ENCODE measurements at regions of chr7 and their contacts with region 1.

Region 1: DNA sequence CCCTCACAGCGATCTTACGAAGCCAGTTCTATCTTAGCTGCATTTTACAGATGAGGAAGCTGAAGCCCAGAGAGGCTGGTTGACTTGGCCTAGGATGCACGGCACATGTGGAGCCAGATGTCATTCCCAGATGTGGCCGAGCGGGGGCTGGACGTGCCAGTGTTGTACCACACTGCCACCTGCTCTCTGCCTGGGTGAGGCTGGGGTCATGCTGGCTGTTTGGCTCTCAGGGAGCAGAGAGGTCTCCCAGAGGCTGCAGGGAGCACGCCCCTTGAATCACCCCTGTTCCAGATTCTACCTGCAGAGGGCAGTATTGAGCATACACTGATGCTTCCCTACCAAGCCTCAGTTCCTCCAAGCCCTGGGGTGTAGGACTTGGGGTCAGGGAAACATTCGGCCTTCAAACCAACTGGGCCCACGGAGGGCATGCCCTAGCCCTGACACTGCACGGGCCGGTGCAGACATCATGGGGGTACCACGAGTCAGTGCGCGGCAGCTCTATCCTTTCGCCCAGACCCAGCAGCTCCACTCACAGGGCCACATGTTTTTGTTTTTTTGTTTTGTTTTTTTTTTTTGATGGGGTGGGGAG is 3.8 kb upstream of the GTF2IRD1 start:
- DNase-seq: peak in 1 of 2 donors; percentile 53
- ATAC-seq: peak in 5 of 8 donors; percentile 15 to 52 (median 23)
- H3K4me3 ChIP-seq: no peak overlapping the region
- H3K27ac ChIP-seq: no peak overlapping the region
- H3K4me1 ChIP-seq: peaks cover 0 to 23% (median 11%) of the 10 kb centered on the region in 9 donors
- H3K27me3 ChIP-seq: peaks cover 0 to 22% (median 0%) of the 10 kb centered on the region in 7 donors
- CTCF ChIP-seq: peak; percentile 70 to 90 (median 81)

Region 2: DNA sequence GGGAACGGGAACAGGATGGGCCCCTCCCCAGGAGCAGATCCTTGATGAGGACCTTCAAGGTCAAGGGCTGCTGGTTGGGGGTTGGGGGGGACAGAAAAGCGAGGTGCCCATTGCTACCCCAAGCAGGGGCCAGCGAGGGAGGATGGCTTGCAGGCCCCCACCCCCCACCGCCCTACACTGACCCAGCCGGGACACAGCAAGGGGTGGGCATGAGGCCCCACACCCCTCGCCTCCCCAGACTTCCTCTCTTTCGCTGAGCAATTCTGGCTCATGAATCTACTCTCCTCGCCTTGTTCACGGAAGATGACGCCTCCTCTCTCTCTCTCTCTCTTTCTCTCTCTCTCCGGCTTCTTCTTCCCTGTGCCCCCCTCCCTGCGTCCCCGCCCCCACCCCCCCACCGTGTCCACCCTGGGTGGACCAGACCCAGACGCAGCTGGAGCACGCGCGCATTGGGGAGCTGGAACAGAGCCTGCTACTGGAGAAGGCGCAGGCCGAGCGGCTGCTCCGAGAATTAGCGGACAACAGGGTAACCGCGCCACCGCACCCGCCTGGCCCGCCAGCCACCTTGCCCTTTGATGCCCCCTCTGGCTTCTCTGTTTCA is 77.3 kb before region 1 on chr7:
- intact Hi-C with region 1: no loop called
- DNase-seq: peak; percentile 38 to 62
- ATAC-seq: peak; percentile 37 to 77 (median 71)
- H3K4me3 ChIP-seq: peak overlapping the region in 4 of 10 donors; percentile 3 to 23 (median 13)
- H3K27ac ChIP-seq: peak overlapping the region in 3 of 10 donors; percentile 30 to 41 (median 34)
- H3K4me1 ChIP-seq: peaks cover 0 to 25% (median 0%) of the 10 kb centered on the region in 9 donors
- H3K27me3 ChIP-seq: no peaks in the 10 kb centered on the region
- CTCF ChIP-seq: no peak

Region 3: GRCh38 chr7:74429153-74429747 is 20.7 kb before region 1 on chr7:
- intact Hi-C with region 1: no loop called
- DNase-seq: no peak
- ATAC-seq: peak in 2 of 8 donors; percentile 19 to 46
- H3K4me3 ChIP-seq: no peak overlapping the region
- H3K27ac ChIP-seq: no peak overlapping the region
- H3K4me1 ChIP-seq: peaks cover 0 to 14% (median 0%) of the 10 kb centered on the region in 9 donors
- H3K27me3 ChIP-seq: no peaks in the 10 kb centered on the region
- CTCF ChIP-seq: no peak

Region 4: DNA sequence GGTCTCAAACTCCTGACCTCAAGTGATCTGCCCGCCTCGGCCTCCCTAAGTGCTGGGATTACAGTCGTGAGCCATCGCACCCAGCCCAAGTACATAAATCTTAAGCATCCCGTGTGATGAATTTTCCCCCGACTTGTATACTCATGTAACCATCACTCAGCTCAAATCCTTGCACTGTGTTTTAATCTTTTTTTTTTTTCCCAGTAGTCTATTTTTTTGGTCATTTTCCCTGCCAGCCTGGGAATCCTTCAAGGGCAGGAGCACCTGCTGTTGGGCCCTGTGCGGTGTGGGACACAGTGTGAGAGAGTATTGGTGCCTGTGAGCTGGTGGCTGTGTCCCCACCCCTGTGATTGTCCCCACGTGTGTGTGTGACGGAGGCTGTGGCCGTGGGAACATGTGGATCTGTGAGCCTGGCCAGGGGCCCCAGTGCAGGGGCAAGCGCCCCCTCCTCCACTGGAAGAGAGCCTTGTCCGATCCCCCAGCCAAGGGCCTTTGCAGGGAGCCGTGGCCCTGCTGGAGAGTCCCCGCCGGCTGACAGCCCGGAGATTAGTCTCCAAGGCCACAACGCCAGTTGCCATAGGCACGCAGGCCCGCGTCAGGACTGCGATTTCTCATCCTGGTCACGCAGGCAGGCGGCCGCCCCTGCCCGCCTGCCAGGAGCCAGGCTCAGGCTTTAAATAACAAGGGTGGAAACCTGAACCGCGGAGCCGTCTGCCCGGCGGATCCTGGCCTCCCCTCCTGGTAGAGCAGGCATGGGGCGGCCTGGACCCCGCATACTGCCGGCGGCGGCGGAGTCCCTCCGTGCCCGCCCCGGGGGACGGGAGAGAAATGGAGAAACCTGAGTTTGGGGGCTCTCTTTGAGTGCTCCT is 30.3 kb after region 1 on chr7:
- intact Hi-C with region 1: loop called in 1 of 10 experiments (anchors 2 kb)
- DNase-seq: peak; percentile 82 to 83
- ATAC-seq: peak; percentile 63 to 80 (median 73)
- H3K4me3 ChIP-seq: peak overlapping the region in 9 of 10 donors; percentile 24 to 64 (median 53)
- H3K27ac ChIP-seq: peak overlapping the region; percentile 84 to 98 (median 94)
- H3K4me1 ChIP-seq: peaks cover 25 to 81% (median 58%) of the 10 kb centered on the region in 9 donors
- H3K27me3 ChIP-seq: peaks cover 0 to 14% (median 0%) of the 10 kb centered on the region in 7 donors
- CTCF ChIP-seq: peak in 2 of 9 donors; percentile 7 to 20

Region 5: GRCh38 chr7:74518041-74518440 is 68.1 kb after region 1 on chr7:
- intact Hi-C with region 1: loop called in 1 of 10 experiments (anchors 5 kb)
- DNase-seq: no peak
- ATAC-seq: no peak
- H3K4me3 ChIP-seq: no peak overlapping the region
- H3K27ac ChIP-seq: no peak overlapping the region
- H3K4me1 ChIP-seq: peaks cover 0 to 23% (median 10%) of the 10 kb centered on the region in 9 donors
- H3K27me3 ChIP-seq: no peaks in the 10 kb centered on the region
- CTCF ChIP-seq: no peak

Region 6: DNA sequence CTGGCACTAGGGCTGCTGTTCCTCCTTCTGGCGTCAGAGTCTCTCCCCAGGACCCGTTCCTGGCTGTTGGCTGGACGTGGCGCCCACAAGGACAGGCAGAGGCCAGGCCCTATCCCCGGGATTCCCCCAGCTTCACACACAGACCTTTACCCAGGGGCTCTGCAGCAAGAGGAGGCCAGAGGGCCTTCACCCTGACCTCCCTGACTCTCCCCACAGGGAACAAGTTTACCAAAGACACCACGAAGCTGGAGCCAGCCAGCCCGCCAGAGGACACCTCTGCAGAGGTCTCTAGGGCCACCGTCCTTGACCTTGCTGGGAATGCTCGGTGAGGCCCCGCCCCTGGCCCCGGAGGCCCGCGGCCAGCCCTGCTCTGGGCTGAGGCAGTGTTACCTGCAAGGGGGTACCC is 86.1 kb after region 1 on chr7:
- intact Hi-C with region 1: loop called in 2 of 10 experiments (anchors 5 to 10 kb)
- DNase-seq: peak in 1 of 2 donors; percentile 39
- ATAC-seq: peak in 7 of 8 donors; percentile 17 to 51 (median 37)
- H3K4me3 ChIP-seq: no peak overlapping the region
- H3K27ac ChIP-seq: peak overlapping the region in 9 of 10 donors; percentile 45 to 76 (median 68)
- H3K4me1 ChIP-seq: peaks cover 0 to 14% (median 2%) of the 10 kb centered on the region in 9 donors
- H3K27me3 ChIP-seq: no peaks in the 10 kb centered on the region
- CTCF ChIP-seq: no peak

Region 7: GRCh38 chr7:74569501-74570075 is 119.7 kb after region 1 on chr7:
- intact Hi-C with region 1: loop called (anchors 5 to 10 kb)
- DNase-seq: no peak
- ATAC-seq: no peak
- H3K4me3 ChIP-seq: no peak overlapping the region
- H3K27ac ChIP-seq: no peak overlapping the region
- H3K4me1 ChIP-seq: no peaks in the 10 kb centered on the region
- H3K27me3 ChIP-seq: no peaks in the 10 kb centered on the region
- CTCF ChIP-seq: no peak

Region 8: GRCh38 chr7:74656837-74657691 is 207.2 kb after region 1 on chr7:
- intact Hi-C with region 1: loop called in 3 of 10 experiments (anchors 10 kb)
- DNase-seq: peak; percentile 98 to 100
- ATAC-seq: peak; percentile 90 to 96 (median 95)
- H3K4me3 ChIP-seq: peak overlapping the region; percentile 75 to 100 (median 98)
- H3K27ac ChIP-seq: peak overlapping the region; percentile 99 to 100 (median 100)
- H3K4me1 ChIP-seq: peaks cover 3 to 46% (median 41%) of the 10 kb centered on the region in 9 donors
- H3K27me3 ChIP-seq: no peaks in the 10 kb centered on the region
- CTCF ChIP-seq: peak in 6 of 9 donors; percentile 29 to 58 (median 44)